Posterior vena cava (tissue), 2 donors: ENCODE measurements at regions of chr6 and their contacts with region 1.

Region 1: DNA sequence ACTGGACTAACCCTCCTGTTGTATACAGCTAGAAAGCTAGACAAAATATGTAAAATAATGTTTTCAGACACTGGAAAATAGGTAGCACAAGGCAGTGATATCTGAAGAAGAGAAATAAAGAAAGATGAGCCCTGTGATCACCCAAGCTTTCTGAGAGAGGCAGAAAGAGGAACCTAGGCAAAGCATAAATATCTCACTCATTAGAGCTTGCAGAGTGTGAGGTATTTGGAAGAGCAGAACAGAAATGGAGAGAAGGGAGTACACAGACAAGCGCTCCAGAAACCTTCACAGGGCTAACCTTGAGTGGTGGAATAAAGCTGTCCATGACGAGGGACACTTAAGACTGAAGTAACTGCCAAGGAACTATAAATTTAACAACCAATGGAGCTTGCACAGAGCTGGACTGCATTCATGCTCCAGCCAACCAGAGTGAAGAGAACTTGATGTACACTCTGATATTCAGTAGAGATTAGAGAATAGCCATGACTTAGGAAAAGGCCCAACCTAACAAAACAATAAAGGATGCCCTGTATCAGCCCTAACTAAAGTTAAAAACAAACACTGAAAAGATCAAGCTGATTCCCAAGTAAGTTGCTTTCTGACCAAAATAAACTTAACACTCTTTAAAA is 280.9 kb upstream of the STXBP5 start:
- DNase-seq: no peak

Region 2: DNA sequence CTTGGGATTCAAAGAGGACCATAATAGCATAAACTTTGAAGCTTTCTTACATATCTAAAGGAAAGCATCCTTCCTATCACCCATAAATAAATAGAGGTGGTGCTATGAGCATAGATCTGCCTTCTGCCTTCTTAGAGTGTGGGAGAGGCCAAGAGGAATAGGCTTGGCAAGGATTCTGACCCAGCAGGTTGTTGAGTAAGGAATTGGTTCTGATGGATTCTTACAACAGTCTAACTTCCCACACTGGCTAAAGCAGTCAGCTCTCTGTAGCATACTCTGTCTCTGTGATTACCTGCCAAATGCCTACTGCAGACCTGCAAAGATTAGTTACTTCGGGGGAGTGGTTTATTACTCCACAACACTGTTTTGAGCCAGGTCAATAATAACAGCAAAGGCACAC is 577.7 kb before region 1 on chr6:
- intact Hi-C with region 1: loop called in 1 of 2 experiments (anchors 5 kb)
- DNase-seq: no peak

Region 3: GRCh38 chr6:147022041-147022440 is 98.7 kb after region 1 on chr6:
- intact Hi-C with region 1: no loop called
- DNase-seq: no peak